Transverse colon (tissue), 4 donors: ENCODE measurements at regions of chr20 and their contacts with region 1.

Region 1: GRCh38 chr20:62583420-62583920 is 58.8 kb upstream of the SLCO4A1 start:
- DNase-seq: no peak
- H3K4me3 ChIP-seq: no peak overlapping the region
- H3K27ac ChIP-seq: no peak overlapping the region
- H3K4me1 ChIP-seq: peaks cover 0 to 8% (median 6%) of the 10 kb centered on the region in 4 donors
- H3K27me3 ChIP-seq: peaks cover 83% of the 10 kb centered on the region
- CTCF ChIP-seq: peak in 1 of 5 experiments; percentile 11
- EP300 ChIP-seq: no peak
- POLR2A ChIP-seq: no peak

Region 2: DNA sequence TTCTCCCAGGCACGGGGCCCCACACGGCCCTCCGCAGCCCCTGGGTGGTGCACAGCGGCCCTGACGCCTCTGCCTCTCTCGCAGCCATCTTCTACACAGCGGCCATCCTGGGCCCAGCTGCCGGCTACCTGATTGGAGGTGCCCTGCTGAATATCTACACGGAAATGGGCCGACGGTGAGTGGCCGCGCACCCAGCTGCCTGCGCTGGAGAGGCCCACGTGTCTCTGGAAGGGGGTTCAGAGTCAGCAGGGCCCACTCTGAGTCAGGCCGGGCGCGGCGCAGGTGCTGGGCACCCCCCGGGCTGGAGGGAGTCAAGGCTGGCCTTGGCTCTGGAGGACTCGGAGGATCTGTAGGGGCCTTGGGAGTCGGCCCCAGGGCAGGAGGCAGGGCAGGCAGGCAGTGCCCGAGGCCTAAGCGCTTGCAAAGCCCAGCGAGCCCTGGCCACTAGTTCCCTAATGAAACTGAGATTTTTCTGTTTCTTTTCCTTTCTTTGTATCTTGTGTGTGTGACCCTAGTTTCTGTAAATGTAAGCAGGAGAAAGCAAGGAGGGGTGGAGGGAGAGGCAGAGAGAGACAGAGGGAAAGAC is 75.2 kb after region 1 on chr20:
- in situ Hi-C with region 1: no loop called
- intact Hi-C with region 1: loop called (anchors 2 kb)
- DNase-seq: no peak
- H3K4me3 ChIP-seq: no peak overlapping the region
- H3K27ac ChIP-seq: no peak overlapping the region
- H3K4me1 ChIP-seq: no peaks in the 10 kb centered on the region
- H3K27me3 ChIP-seq: no peaks in the 10 kb centered on the region
- CTCF ChIP-seq: no peak
- EP300 ChIP-seq: no peak
- POLR2A ChIP-seq: no peak

Region 3: DNA sequence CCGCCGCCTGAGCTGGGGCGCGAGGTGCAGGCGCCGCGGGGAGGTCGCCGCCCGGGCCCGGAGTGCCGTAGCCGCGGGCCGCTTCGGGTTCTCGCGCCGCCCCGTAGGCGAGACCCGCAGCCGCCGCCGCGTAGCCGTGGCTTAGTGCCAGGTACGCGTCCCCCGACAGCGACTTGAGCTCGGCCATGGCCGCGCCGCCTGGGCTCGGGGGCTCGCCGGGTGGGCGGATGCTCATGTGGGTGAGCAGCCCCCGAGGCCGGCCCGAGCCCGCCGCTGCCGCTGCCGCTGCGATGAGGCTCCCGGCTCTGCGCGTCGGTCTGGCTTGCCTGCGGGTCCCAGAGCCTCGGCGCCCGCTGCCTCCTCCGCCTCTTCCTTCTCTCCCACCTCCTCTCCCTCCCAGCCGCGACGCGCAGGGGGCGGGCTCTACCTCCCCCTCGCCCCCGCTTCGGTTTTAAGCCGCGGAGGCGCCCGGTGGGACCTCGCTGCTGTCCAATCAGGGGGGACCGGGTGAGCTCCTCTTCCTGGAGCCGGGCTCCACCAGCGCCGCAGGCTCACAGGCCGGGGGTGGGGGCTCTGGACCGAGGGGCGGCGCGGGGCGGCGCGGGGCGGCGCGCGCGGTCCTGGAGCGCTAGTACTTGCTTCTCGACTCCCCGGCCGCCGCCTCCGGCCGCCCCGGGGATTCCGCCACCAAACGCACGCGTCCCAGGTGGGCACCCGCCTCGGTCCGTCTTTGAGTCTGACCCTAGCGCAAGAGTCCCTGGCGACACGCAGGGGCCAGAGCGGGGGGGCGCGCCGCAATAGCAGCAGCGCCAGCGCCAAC is 423.3 kb after region 1 on chr20 and contains the start of gene BHLHE23:
- in situ Hi-C with region 1: no loop called
- intact Hi-C with region 1: no loop called
- DNase-seq: no peak
- H3K4me3 ChIP-seq: peak within 1 kb of the TSS in 1 of 4 donors; percentile 14
- H3K27ac ChIP-seq: no peak within 1 kb of the TSS
- H3K4me1 ChIP-seq: peaks cover 0 to 19% (median 18%) of the 10 kb centered on the region in 4 donors
- H3K27me3 ChIP-seq: peaks cover 100% of the 10 kb centered on the region
- CTCF ChIP-seq: no peak
- EP300 ChIP-seq: no peak
- POLR2A ChIP-seq: no peak
- total RNA-seq, gene BHLHE23: not detected